WTC11 (cell line): ENCODE measurements at regions of chr6 and their contacts with region 1.

Region 1: DNA sequence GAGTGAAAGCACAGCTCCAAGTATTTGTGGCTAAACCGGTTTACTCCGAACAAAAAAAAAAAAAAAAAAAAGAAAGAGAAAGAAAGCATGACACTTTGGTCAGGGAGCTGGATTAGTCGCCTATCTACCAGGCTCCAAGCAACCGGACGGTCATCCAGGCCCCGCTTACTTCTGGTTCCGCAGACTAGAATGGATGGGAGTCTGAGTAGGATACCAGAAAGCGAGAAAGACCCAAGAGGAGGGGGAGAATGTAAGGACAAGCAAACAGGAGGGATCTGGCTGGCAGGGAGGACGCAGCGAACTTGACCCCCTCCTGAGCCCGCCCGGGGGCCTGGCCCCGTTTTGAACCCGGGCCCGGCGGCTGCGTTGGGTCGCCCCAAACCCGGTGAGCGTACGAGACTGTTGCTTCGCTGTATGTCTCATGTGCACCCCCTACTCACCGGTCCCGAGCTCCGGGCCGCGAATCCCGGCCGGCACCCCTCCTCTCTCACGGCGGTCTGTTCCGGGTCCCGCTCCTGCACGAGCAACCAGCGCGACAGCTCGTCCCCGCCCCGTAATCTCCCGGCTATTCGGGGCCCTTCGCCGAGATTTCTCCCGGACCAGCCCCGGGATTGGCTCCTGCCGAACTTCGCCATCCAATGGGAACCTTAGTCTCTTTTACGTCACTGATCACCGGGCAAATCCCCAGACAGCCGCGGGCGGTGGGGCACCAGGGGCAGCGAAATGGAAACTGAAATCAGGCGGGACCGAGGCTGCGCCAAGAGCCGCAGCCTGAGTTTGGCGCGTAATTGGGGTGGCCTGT is at the start of gene TRIM26:
- DNase-seq: peak; percentile 98
- ATAC-seq: peak; percentile 89
- H3K4me3 Mint-ChIP-seq: peak within 1 kb of the TSS; percentile 97
- H3K27ac Mint-ChIP-seq: peak within 1 kb of the TSS; percentile 99
- H3K4me1 Mint-ChIP-seq: peaks cover 46% of the 10 kb centered on the region
- H3K27me3 Mint-ChIP-seq: peaks cover 21% of the 10 kb centered on the region
- CTCF ChIP-seq: no peak
- total RNA-seq, gene TRIM26: 27.7 to 33.0 TPM (median 30.5 TPM) in 3 replicates

Region 2: DNA sequence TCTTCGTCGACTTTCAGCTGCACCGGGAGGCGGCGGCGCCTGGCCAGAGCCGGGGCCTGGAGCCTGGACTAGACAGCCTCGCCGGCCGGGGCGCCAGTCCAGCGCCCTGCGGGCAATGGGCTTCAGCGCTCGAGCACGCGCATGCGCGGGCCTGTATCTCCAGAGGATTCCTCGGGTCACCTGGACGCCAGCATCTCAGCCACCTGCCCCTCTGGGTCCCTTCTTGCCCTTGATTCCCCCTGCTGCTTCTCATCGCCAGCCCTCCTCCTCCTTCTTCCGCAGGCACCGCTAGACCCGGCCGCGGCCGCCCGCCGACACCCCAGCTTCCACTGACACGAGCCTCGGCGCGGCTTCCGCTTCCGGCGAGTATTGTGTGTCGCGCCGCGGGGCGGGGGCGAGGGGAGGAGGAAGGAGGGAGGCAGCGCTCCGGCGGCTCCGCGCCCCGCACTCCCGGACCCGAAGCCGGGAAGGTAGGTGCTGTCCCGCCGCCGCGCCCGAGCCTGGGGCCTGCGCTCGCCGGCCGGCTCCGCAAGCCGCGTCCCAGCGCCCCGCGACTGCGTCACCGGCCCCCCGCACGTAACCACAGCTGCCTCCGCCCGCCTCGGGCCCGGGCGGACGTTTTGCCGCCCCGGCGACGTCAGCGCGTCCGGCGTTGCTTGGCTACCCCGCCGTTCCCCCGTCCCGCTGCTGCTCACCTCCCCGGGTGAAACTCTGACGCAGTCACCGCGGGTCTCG is 113.6 kb after region 1 on chr6 and contains the start of gene TRIM39:
- CTCF ChIA-PET with region 1: interaction called, 3 read pairs
- POLR2A ChIA-PET with region 1: interaction called, 20 read pairs
- DNase-seq: peak; percentile 77
- ATAC-seq: peak; percentile 27
- H3K4me3 Mint-ChIP-seq: peak within 1 kb of the TSS; percentile 82
- H3K27ac Mint-ChIP-seq: peak within 1 kb of the TSS; percentile 99
- H3K4me1 Mint-ChIP-seq: peaks cover 48% of the 10 kb centered on the region
- H3K27me3 Mint-ChIP-seq: no peaks in the 10 kb centered on the region; the same call in 1 of the 2 replicates
- CTCF ChIP-seq: no peak
- total RNA-seq, gene TRIM39: 22.7 to 24.9 TPM (median 24.0 TPM) in 3 replicates